PC-3 (cell line): ENCODE measurements at regions of chr20 and their contacts with region 1.

Region 1: GRCh38 chr20:45436732-45437391 is 20.9 kb downstream of the PIGT start:
- DNase-seq: peak; percentile 92
- ATAC-seq: peak; percentile 98
- H3K4me3 ChIP-seq: peak overlapping the region; percentile 75
- H3K27ac ChIP-seq: no peak overlapping the region
- H3K4me1 ChIP-seq: peaks cover 13% of the 10 kb centered on the region
- H3K27me3 ChIP-seq: no peaks in the 10 kb centered on the region
- CTCF ChIP-seq: peak; percentile 98

Region 2: DNA sequence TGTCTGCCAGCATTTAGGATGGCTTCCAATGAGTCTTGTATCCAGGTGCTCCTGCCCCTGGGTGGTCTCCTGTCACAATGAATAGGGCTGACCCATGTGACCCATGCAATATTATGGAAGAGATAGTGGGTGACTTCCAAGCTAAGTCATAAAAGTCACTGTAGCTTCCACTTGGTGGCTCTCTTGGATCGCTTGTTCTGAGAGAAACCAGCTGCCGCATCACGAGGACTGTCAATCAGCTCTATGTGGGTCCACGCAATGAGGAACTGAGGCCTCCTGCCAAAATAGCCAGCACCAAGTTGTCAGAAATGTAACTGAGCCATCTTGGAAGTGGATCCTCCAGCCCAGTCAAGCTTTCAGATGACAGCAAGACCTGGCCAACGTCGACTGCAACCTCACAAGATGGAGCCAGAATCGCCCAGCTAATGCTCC is 113.9 kb before region 1 on chr20:
- CTCF ChIA-PET with region 1: interaction called, 34 read pairs
- POLR2A ChIA-PET with region 1: no interaction called
- intact Hi-C with region 1: loop called (anchors 1 kb)
- DNase-seq: peak; percentile 70
- ATAC-seq: peak; percentile 54
- H3K4me3 ChIP-seq: no peak overlapping the region
- H3K27ac ChIP-seq: no peak overlapping the region
- H3K4me1 ChIP-seq: peaks cover 9% of the 10 kb centered on the region
- H3K27me3 ChIP-seq: no peaks in the 10 kb centered on the region
- CTCF ChIP-seq: peak; percentile 63

Region 3: DNA sequence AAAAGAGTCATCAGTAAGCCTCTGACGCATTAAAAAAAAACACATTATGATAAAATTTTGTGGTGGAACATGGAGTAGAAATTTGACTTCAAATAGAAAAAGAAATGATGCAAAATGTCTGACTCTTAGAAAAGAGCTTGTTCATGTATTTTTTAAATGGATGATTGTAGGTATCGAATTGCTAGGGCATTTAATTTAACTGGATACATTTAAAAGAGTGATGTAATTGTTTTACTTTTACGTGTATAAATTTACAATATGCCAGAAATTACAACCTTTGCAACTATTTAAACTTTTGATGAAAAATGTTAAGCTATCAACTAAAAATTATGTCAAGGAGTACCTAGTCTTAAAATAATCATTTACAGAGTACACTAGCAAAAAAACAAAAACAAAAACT is 84.1 kb before region 1 on chr20:
- CTCF ChIA-PET with region 1: no interaction called
- POLR2A ChIA-PET with region 1: no interaction called
- intact Hi-C with region 1: no loop called
- DNase-seq: no peak
- ATAC-seq: no peak
- H3K4me3 ChIP-seq: no peak overlapping the region
- H3K27ac ChIP-seq: no peak overlapping the region
- H3K4me1 ChIP-seq: peaks cover 26% of the 10 kb centered on the region
- H3K27me3 ChIP-seq: no peaks in the 10 kb centered on the region
- CTCF ChIP-seq: no peak

Region 4: GRCh38 chr20:45373353-45374100 is 63.3 kb before region 1 on chr20:
- CTCF ChIA-PET with region 1: interaction called, 80 read pairs
- POLR2A ChIA-PET with region 1: no interaction called
- intact Hi-C with region 1: loop called (anchors 1 kb)
- DNase-seq: peak; percentile 93
- ATAC-seq: peak; percentile 94
- H3K4me3 ChIP-seq: peak overlapping the region; percentile 23; the same call in 1 of the 2 replicates
- H3K27ac ChIP-seq: no peak overlapping the region
- H3K4me1 ChIP-seq: no peaks in the 10 kb centered on the region; the same call in 1 of the 2 replicates
- H3K27me3 ChIP-seq: no peaks in the 10 kb centered on the region
- CTCF ChIP-seq: peak; percentile 97

Region 5: DNA sequence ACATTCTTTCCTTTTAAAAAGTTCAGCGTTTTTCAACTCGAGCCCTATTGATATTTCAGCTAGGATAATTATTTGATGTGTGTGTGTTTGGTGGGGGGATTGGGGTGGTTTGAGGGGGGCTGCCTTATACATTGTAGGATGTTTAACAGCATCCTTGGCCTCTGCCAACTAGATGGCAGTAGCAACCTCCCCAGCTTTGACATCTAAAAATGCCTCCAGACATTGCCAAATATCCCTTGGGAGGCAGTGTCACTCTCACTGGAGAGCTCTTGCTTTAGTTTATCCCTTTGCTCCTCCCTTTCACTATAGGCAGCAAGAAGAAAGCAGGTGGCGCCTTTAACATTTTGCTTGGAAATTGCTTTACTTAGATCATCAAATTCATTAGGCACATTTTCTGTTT is 44.1 kb before region 1 on chr20:
- CTCF ChIA-PET with region 1: interaction called, 25 read pairs
- POLR2A ChIA-PET with region 1: interaction called, 3 read pairs
- intact Hi-C with region 1: loop called (anchors 1 kb)
- DNase-seq: peak; percentile 46
- ATAC-seq: peak; percentile 82
- H3K4me3 ChIP-seq: no peak overlapping the region
- H3K27ac ChIP-seq: no peak overlapping the region
- H3K4me1 ChIP-seq: peaks cover 8% of the 10 kb centered on the region
- H3K27me3 ChIP-seq: no peaks in the 10 kb centered on the region
- CTCF ChIP-seq: peak; percentile 57

Region 6: GRCh38 chr20:45415774-45416637 is 20.9 kb before region 1 on chr20 and contains the start of gene PIGT:
- CTCF ChIA-PET with region 1: interaction called, 24 read pairs
- POLR2A ChIA-PET with region 1: interaction called, 3 read pairs
- intact Hi-C with region 1: loop called (anchors 1 kb)
- DNase-seq: peak; percentile 90
- ATAC-seq: peak; percentile 56
- H3K4me3 ChIP-seq: peak within 1 kb of the TSS; percentile 85
- H3K27ac ChIP-seq: peak within 1 kb of the TSS; percentile 59
- H3K4me1 ChIP-seq: peaks cover 47% of the 10 kb centered on the region
- H3K27me3 ChIP-seq: no peaks in the 10 kb centered on the region
- CTCF ChIP-seq: no peak
- total RNA-seq, gene PIGT: 101 and 129 TPM in 2 replicates

Region 7: GRCh38 chr20:45564760-45565276 is 128.0 kb after region 1 on chr20:
- CTCF ChIA-PET with region 1: no interaction called
- POLR2A ChIA-PET with region 1: no interaction called
- intact Hi-C with region 1: no loop called
- DNase-seq: no peak
- ATAC-seq: no peak
- H3K4me3 ChIP-seq: no peak overlapping the region
- H3K27ac ChIP-seq: no peak overlapping the region
- H3K4me1 ChIP-seq: no peaks in the 10 kb centered on the region
- H3K27me3 ChIP-seq: peaks cover 64% of the 10 kb centered on the region
- CTCF ChIP-seq: no peak